Caco-2 (cell line): ENCODE measurements at regions of chr3 and their contacts with region 1.

Region 1: GRCh38 chr3:182760576-182761164 is 32.6 kb upstream of the ATP11B start:
- DNase-seq: peak; percentile 71 to 82
- H3K4me3 ChIP-seq: no peak overlapping the region
- H3K4me3 Mint-ChIP-seq: peak overlapping the region; percentile 67
- H3K27ac Mint-ChIP-seq: peak overlapping the region; percentile 87
- H3K4me1 ChIP-seq: peaks cover 28% of the 10 kb centered on the region
- H3K4me1 Mint-ChIP-seq: peaks cover 17% of the 10 kb centered on the region
- H3K27me3 ChIP-seq: no peaks in the 10 kb centered on the region
- H3K27me3 Mint-ChIP-seq: no peaks in the 10 kb centered on the region
- CTCF ChIP-seq: no peak

Region 2: DNA sequence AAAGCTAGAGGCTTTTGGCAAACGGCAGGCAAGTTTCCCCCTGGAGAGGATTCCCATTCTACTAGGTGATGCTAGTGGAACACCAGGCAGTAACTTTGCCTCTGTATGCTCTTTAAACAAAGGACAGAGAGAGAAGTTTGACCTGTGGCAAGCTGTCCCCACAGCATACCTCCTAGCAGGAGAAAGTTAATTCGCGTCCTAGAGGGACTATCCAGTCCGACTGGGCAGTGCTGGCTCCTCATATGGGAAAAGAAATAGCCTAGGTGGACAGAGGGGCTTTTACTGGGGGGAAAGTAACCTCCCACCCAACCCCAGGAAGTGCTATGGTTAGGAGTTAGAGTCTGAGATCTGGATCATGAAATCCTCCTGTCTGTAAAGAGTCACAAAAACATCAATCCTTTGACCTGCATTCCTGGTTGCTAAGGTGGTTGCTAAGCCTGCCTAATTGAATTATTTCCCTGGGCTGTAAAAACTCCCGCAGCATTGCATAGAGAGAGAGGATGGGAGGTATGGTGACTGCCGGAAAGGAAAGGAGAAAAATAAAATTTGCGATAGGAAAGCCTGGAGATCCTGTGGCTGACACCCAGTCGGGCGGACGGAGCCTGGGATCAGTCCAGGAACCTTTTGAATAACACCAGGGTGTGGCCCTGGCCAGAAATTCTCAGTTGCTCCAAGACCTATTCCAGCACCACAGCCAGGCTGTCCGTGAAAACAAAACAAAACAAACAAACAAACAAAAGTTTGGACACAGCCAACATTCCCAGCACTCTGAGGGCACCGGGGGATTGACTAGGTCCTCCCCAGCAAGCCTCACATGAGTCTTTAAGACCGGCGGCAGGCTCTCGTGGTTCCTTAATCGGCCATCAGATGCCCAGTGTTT is 35.1 kb before region 1 on chr3:
- CTCF ChIA-PET with region 1: no interaction called
- POLR2A ChIA-PET with region 1: no interaction called
- intact Hi-C with region 1: loop called (anchors 2 kb)
- DNase-seq: peak in 1 of 2 experiments; percentile 43
- H3K4me3 ChIP-seq: no peak overlapping the region
- H3K4me3 Mint-ChIP-seq: no peak overlapping the region
- H3K27ac Mint-ChIP-seq: peak overlapping the region; percentile 60
- H3K4me1 ChIP-seq: peaks cover 16% of the 10 kb centered on the region
- H3K4me1 Mint-ChIP-seq: peaks cover 22% of the 10 kb centered on the region
- H3K27me3 ChIP-seq: no peaks in the 10 kb centered on the region
- H3K27me3 Mint-ChIP-seq: no peaks in the 10 kb centered on the region
- CTCF ChIP-seq: no peak

Region 3: GRCh38 chr3:182746959-182747358 is 13.7 kb before region 1 on chr3:
- CTCF ChIA-PET with region 1: interaction called, 3 read pairs
- POLR2A ChIA-PET with region 1: no interaction called
- intact Hi-C with region 1: loop called (anchors 2 kb)
- DNase-seq: no peak
- H3K4me3 ChIP-seq: no peak overlapping the region
- H3K4me3 Mint-ChIP-seq: peak overlapping the region; percentile 25
- H3K27ac Mint-ChIP-seq: peak overlapping the region; percentile 74
- H3K4me1 ChIP-seq: peaks cover 21% of the 10 kb centered on the region
- H3K4me1 Mint-ChIP-seq: peaks cover 8% of the 10 kb centered on the region
- H3K27me3 ChIP-seq: no peaks in the 10 kb centered on the region
- H3K27me3 Mint-ChIP-seq: no peaks in the 10 kb centered on the region
- CTCF ChIP-seq: no peak

Region 4: GRCh38 chr3:182792901-182793662 is 32.4 kb after region 1 on chr3 and contains the start of gene ATP11B:
- CTCF ChIA-PET with region 1: interaction called, 4 read pairs
- POLR2A ChIA-PET with region 1: interaction called, 11 read pairs
- intact Hi-C with region 1: loop called (anchors 1 kb)
- DNase-seq: peak; percentile 74 to 80
- H3K4me3 ChIP-seq: peak within 1 kb of the TSS; percentile 91
- H3K4me3 Mint-ChIP-seq: peak within 1 kb of the TSS; percentile 95
- H3K27ac Mint-ChIP-seq: peak within 1 kb of the TSS; percentile 93
- H3K4me1 ChIP-seq: 0 out of 2 replicates have a peak, but pooled peaks cover 13% of the 10 kb centered on the region
- H3K4me1 Mint-ChIP-seq: peaks cover 9% of the 10 kb centered on the region
- H3K27me3 ChIP-seq: no peaks in the 10 kb centered on the region
- H3K27me3 Mint-ChIP-seq: no peaks in the 10 kb centered on the region
- CTCF ChIP-seq: no peak
- total RNA-seq, gene ATP11B: 54.5 and 58.1 TPM in 2 replicates